ENCODE measurements at regions of chr2 and their contacts with region 1.

Region 1: DNA sequence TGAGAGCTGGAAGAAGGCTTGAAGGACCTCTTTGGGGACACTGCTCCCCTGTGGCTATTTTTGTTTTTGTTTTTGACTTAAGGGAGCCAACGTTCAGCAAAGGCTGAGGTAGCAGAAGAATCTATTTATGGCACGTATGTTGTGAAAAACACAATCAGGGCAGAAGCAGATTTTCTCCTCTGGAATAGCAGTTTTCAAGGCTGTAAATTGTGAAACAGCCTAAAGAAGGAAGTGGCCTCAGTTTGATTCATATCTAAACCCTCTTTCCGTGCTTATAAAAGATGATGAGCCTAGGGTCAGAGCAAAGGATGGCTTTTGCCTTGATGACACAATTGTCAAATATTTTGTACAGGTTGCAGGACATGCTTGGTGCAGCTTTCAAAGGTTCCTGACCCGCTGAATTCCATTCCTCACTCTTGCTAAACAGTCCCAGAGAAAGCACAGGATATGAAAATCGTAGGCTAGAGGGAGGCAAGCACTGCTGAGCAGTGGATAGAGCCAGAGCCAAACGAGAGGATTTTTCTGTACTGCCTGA is 106.2 kb upstream of the DLX2 start:
- DNase-seq: peak; percentile 58
- H3K4me3 ChIP-seq: peak overlapping the region in 1 of 3 experiments; percentile 27
- H3K27ac ChIP-seq: peak overlapping the region; percentile 39
- H3K4me1 ChIP-seq: peaks cover 16% of the 10 kb centered on the region
- H3K27me3 ChIP-seq: no peaks in the 10 kb centered on the region
- CTCF ChIP-seq: no peak
- POLR2A ChIP-seq: no peak

Region 2: GRCh38 chr2:171124541-171124940 is 1084.3 kb before region 1 on chr2:
- CTCF ChIA-PET with region 1: no interaction called
- POLR2A ChIA-PET with region 1: no interaction called
- dilution Hi-C with region 1: no loop called
- intact Hi-C with region 1: no loop called
- DNase-seq: no peak
- H3K4me3 ChIP-seq: no peak overlapping the region
- H3K27ac ChIP-seq: no peak overlapping the region
- H3K4me1 ChIP-seq: no peaks in the 10 kb centered on the region
- H3K27me3 ChIP-seq: no peaks in the 10 kb centered on the region
- CTCF ChIP-seq: no peak
- POLR2A ChIP-seq: no peak

Region 3: DNA sequence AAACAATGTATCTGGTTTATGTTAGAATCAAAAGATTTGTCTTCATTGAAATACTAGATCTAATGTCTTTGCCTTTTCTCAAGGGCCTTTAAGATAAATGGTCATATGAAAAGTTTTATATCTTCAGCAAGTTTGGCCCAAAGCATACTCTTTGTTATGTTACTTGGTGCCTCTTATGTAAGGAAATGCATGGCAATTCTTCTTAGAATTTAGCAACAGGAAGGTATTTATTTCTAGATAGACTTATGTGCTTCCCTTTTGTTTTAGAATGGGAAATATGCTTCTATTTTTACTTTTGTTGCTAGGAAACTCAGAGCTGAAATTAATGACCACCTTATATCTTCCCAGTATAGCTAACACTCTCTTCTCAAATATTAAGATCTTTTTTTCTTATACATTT is 11.3 kb after region 1 on chr2:
- CTCF ChIA-PET with region 1: interaction called, 5 read pairs
- POLR2A ChIA-PET with region 1: no interaction called
- dilution Hi-C with region 1: no loop called
- intact Hi-C with region 1: loop called (anchors 1 kb)
- DNase-seq: peak; percentile 66
- H3K4me3 ChIP-seq: no peak overlapping the region
- H3K27ac ChIP-seq: no peak overlapping the region
- H3K4me1 ChIP-seq: peaks cover 4% of the 10 kb centered on the region
- H3K27me3 ChIP-seq: no peaks in the 10 kb centered on the region
- CTCF ChIP-seq: no peak
- POLR2A ChIP-seq: no peak

Region 4: GRCh38 chr2:172246649-172247048 is 37.8 kb after region 1 on chr2:
- CTCF ChIA-PET with region 1: interaction called, 4 read pairs
- POLR2A ChIA-PET with region 1: no interaction called
- dilution Hi-C with region 1: no loop called
- intact Hi-C with region 1: loop called (anchors 2 kb)
- DNase-seq: peak; percentile 53
- H3K4me3 ChIP-seq: no peak overlapping the region
- H3K27ac ChIP-seq: peak overlapping the region; percentile 5
- H3K4me1 ChIP-seq: peaks cover 67% of the 10 kb centered on the region
- H3K27me3 ChIP-seq: no peaks in the 10 kb centered on the region
- CTCF ChIP-seq: no peak
- POLR2A ChIP-seq: no peak

Region 5: DNA sequence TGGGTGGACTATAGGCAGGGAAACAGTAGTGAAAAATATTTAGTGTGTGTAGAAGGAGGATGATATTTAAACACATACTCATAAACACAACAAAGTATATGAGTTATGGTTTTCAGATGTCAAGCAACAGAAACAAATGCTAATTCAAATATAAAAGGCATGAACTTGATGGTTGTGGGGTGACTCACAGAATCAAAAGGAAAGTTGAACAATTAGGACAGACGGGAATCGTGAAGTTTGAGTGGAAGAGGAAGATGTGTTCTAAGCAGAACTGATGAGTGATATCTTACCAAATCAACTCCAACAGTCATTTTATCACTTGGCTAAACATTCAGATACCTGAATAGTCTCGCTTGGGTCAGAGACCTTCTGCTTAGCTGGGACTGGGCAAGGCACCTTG is 164.9 kb after region 1 on chr2:
- CTCF ChIA-PET with region 1: no interaction called
- POLR2A ChIA-PET with region 1: no interaction called
- dilution Hi-C with region 1: no loop called
- intact Hi-C with region 1: no loop called
- DNase-seq: no peak
- H3K4me3 ChIP-seq: no peak overlapping the region
- H3K27ac ChIP-seq: no peak overlapping the region
- H3K4me1 ChIP-seq: peaks cover 7% of the 10 kb centered on the region
- H3K27me3 ChIP-seq: no peaks in the 10 kb centered on the region
- CTCF ChIP-seq: no peak
- POLR2A ChIP-seq: no peak

Measured in endothelial cell of umbilical vein (primary cell).